H1 (cell line): ENCODE measurements at regions of chr15 and their contacts with region 1.

Region 1: GRCh38 chr15:74202452-74203428 is at the start of gene STRA6:
- DNase-seq: peak; percentile 90 to 93
- H3K4me3 ChIP-seq: peak within 1 kb of the TSS; percentile 26 to 60 (median 56); a peak in 7 of 8 replicates
- H3K27ac ChIP-seq: peak within 1 kb of the TSS; percentile 46; the same call in 1 of the 2 replicates
- H3K4me1 ChIP-seq: peaks cover 0 to 49% (median 33%) of the 10 kb centered on the region in 4 experiments; a peak in 6 of 7 replicates
- H3K27me3 ChIP-seq: peaks cover 0 to 7% (median 4%) of the 10 kb centered on the region in 4 experiments; a peak in 2 of 7 replicates
- CTCF ChIP-seq: peak; percentile 56 to 68 (median 60)
- EP300 ChIP-seq: peak in 1 of 2 experiments; percentile 89; a peak in 1 of 3 replicates
- POLR2A ChIP-seq: peak in 1 of 2 experiments; percentile 34; a peak in 2 of 3 replicates
- RAD21 ChIP-seq: peak; percentile 55 to 77
- total RNA-seq, gene STRA6: 7.6 and 9.3 TPM in 2 replicates

Region 2: GRCh38 chr15:74144153-74144775 is 58.5 kb before region 1 on chr15:
- CTCF ChIA-PET with region 1: interaction called, 13 read pairs
- POLR2A ChIA-PET with region 1: interaction called, 5 read pairs
- DNase-seq: no peak
- H3K4me3 ChIP-seq: no peak overlapping the region
- H3K27ac ChIP-seq: no peak overlapping the region
- H3K4me1 ChIP-seq: peaks cover 2 to 20% (median 6%) of the 10 kb centered on the region in 4 experiments; a peak in 5 of 7 replicates
- H3K27me3 ChIP-seq: peaks cover 0 to 3% (median 3%) of the 10 kb centered on the region in 4 experiments; a peak in 1 of 7 replicates
- CTCF ChIP-seq: peak in 2 of 3 experiments; percentile 36 to 57; a peak in 3 of 4 replicates
- EP300 ChIP-seq: no peak
- POLR2A ChIP-seq: no peak
- RAD21 ChIP-seq: peak; percentile 25 to 50; a peak in 3 of 4 replicates

Region 3: GRCh38 chr15:74240002-74240568 is 37.3 kb after region 1 on chr15:
- CTCF ChIA-PET with region 1: interaction called, 13 read pairs
- POLR2A ChIA-PET with region 1: no interaction called
- DNase-seq: no peak
- H3K4me3 ChIP-seq: no peak overlapping the region
- H3K27ac ChIP-seq: no peak overlapping the region
- H3K4me1 ChIP-seq: peaks cover 0 to 26% (median 16%) of the 10 kb centered on the region in 4 experiments; a peak in 6 of 7 replicates
- H3K27me3 ChIP-seq: peaks cover 0 to 9% (median 2%) of the 10 kb centered on the region in 4 experiments; a peak in 4 of 7 replicates
- CTCF ChIP-seq: peak; percentile 28 to 47 (median 40)
- EP300 ChIP-seq: no peak
- POLR2A ChIP-seq: no peak
- RAD21 ChIP-seq: peak; percentile 31 to 51; a peak in 3 of 4 replicates

Region 4: DNA sequence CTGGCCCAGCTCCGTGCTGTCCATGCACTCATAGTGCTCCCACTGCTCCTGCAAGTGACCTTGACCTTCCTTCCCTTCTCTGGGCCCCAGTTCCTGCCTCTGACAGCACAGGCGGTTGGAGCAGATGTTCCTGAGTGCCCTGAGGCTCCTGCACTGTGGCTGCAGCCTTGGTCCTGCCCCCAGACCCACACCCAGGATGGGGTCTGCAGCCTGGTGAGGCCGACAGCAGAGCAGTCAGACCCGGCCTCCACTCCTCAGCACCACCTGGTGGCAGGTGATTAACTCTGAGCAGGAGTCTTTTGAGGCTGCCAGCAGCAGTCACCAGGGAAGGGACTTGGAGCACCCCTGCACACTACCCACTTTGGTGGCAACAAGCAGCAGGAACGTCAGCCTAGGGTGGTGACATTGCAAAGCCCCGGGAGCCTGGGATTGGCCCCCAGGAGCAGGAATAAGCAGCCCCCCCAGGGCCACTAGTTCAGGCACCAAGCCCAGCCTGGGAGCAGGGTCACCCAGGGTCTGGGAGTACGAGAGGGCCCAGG is 100.2 kb after region 1 on chr15:
- CTCF ChIA-PET with region 1: interaction called, 38 read pairs
- POLR2A ChIA-PET with region 1: interaction called, 4 read pairs
- DNase-seq: peak; percentile 47 to 87
- H3K4me3 ChIP-seq: no peak overlapping the region
- H3K27ac ChIP-seq: no peak overlapping the region
- H3K4me1 ChIP-seq: peaks cover 11 to 49% (median 29%) of the 10 kb centered on the region in 4 experiments
- H3K27me3 ChIP-seq: peaks cover 2 to 31% (median 25%) of the 10 kb centered on the region in 4 experiments; a peak in 6 of 7 replicates
- CTCF ChIP-seq: peak; percentile 81 to 92 (median 85)
- EP300 ChIP-seq: no peak
- POLR2A ChIP-seq: no peak
- RAD21 ChIP-seq: peak; percentile 80 to 89